Lower lobe of right lung (tissue), 2 donors: ENCODE measurements at regions of chr13 and their contacts with region 1.

Region 1: GRCh38 chr13:26985285-26985878 is 186.2 kb downstream of the USP12 start:
- DNase-seq: no peak
- ATAC-seq: peak; percentile 74 to 78
- H3K4me3 ChIP-seq: no peak overlapping the region
- H3K27ac ChIP-seq: no peak overlapping the region
- H3K4me1 ChIP-seq: peaks cover 38% of the 10 kb centered on the region
- H3K27me3 ChIP-seq: no peaks in the 10 kb centered on the region
- CTCF ChIP-seq: peak; percentile 74

Region 2: GRCh38 chr13:26914624-26915023 is 70.8 kb before region 1 on chr13:
- intact Hi-C with region 1: no loop called
- DNase-seq: no peak
- ATAC-seq: no peak
- H3K4me3 ChIP-seq: no peak overlapping the region
- H3K27ac ChIP-seq: no peak overlapping the region
- H3K4me1 ChIP-seq: no peaks in the 10 kb centered on the region
- H3K27me3 ChIP-seq: peaks cover 6% of the 10 kb centered on the region
- CTCF ChIP-seq: no peak

Region 3: GRCh38 chr13:27359199-27359821 is 373.9 kb after region 1 on chr13:
- intact Hi-C with region 1: loop called (anchors 5 kb)
- DNase-seq: peak; percentile 65
- ATAC-seq: peak; percentile 62 to 80
- H3K4me3 ChIP-seq: no peak overlapping the region
- H3K27ac ChIP-seq: no peak overlapping the region
- H3K4me1 ChIP-seq: peaks cover 4% of the 10 kb centered on the region
- H3K27me3 ChIP-seq: peaks cover 13% of the 10 kb centered on the region
- CTCF ChIP-seq: peak; percentile 71